ENCODE measurements at regions of chr17 and their contacts with region 1.

Region 1: GRCh38 chr17:45073414-45074070 is 12.4 kb downstream of the NMT1 start:
- DNase-seq: no peak
- ATAC-seq: no peak
- H3K4me3 Mint-ChIP-seq: no peak overlapping the region
- H3K27ac Mint-ChIP-seq: peak overlapping the region; percentile 17
- H3K4me1 Mint-ChIP-seq: peaks cover 32% of the 10 kb centered on the region
- H3K27me3 Mint-ChIP-seq: no peaks in the 10 kb centered on the region
- CTCF ChIP-seq: no peak

Region 2: GRCh38 chr17:45060797-45061605 is 12.5 kb before region 1 on chr17 and contains the start of gene NMT1:
- CTCF ChIA-PET with region 1: no interaction called
- POLR2A ChIA-PET with region 1: interaction called, 10 read pairs
- intact Hi-C with region 1: no loop called
- DNase-seq: peak; percentile 99
- ATAC-seq: peak; percentile 92
- H3K4me3 Mint-ChIP-seq: peak within 1 kb of the TSS; percentile 89
- H3K27ac Mint-ChIP-seq: peak within 1 kb of the TSS; percentile 94
- H3K4me1 Mint-ChIP-seq: peaks cover 37% of the 10 kb centered on the region
- H3K27me3 Mint-ChIP-seq: no peaks in the 10 kb centered on the region
- CTCF ChIP-seq: no peak
- total RNA-seq, gene NMT1: 156 to 169 TPM

Measured in activated CD8-positive, alpha-beta T cell treated with anti-CD3 and anti-CD28 coated beads for 36 hours (primary cell).